ENCODE measurements at regions of chr9 and their contacts with region 1.

Region 1: GRCh38 chr9:133467101-133467500 is 7.3 kb downstream of the CACFD1 start:
- DNase-seq: no peak
- H3K4me3 ChIP-seq: no peak overlapping the region
- CTCF ChIP-seq: no peak

Region 2: DNA sequence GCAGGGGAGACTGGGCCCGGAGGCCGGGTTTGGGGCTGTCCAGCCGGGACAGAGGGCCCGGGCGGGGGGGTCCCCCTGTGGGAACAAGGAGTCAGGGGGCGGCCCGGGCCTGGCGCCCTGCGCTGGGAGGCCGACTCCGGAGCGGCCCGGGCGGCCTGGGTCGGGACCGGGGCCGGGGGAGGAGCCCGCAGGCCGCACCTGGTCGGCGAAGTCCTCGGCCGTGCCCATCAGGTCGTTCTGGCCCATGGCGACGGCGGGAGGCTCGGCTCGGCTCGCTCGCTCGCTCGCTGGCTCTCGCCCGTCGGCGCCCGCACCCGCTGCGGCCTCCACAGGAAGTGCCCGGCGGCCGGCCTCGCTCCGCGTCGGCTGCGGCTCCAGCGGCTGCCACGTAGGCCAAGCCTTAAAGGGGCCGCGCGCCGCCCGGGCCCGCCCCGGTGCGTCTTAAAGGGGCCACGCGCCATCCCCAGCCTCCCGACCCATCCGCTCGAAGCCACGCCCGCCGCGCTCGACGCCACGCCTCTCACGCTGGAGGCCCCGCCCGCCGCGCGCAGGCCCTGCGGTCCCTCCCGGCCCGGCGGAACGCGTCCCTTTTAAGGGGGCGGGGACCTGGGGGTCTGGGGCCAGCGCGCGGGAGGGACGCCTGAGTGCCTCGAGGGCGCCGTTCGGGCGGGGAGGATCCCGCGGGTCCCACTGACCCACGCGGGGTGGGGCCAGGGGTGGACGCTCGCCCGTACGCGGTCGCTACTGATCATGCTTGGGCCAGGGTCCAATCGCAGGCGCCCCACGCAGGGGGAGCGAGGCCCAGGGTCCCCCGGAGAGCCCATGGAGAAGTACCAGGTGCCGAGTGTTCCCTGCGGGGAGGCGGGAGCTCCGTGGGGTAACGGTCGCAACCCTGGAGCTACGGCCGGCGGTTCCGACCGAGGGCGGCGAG is 91.1 kb before region 1 on chr9 and contains the starts of genes STKLD1 and SURF4:
- in situ Hi-C with region 1: loop called (anchors 5 kb)
- DNase-seq: peak; percentile 88
- H3K4me3 ChIP-seq: peak within 1 kb of the TSS; percentile 79
- CTCF ChIP-seq: no peak

Region 3: GRCh38 chr9:133396952-133397351 is 70.1 kb before region 1 on chr9:
- in situ Hi-C with region 1: no loop called
- DNase-seq: no peak
- H3K4me3 ChIP-seq: no peak overlapping the region
- CTCF ChIP-seq: peak; percentile 35

Measured in astrocyte of the cerebellum (primary cell).